Psoas muscle (tissue), 8 donors: ENCODE measurements at regions of chr15 and their contacts with region 1.

Region 1: DNA sequence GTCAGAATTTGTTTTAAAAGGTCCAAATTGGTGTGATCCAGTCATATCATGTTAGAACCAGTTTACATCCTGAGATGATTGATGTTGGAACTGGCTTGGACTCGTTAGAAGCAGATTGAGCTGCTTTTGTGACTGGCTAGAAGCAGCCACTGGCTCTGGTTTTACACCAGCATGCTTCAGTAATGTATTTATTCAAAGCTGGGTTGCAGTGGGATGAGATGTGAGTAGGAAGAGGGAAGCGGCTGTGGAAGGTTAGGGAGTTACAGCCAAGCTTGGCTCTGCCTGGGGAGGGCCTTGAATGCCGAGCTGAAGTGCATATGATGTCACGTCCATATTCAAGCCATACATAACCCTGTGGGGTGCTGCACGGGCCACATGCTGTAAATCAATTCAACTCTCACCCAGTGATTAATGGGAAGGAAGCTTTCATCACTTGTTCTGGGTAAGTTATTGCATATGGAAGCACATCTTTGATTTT is 104.0 kb upstream of the SMAD3 start:
- DNase-seq: no peak
- ATAC-seq: no peak
- H3K4me3 ChIP-seq: no peak overlapping the region
- H3K27ac ChIP-seq: no peak overlapping the region
- H3K4me1 ChIP-seq: no peaks in the 10 kb centered on the region
- H3K27me3 ChIP-seq: no peaks in the 10 kb centered on the region
- CTCF ChIP-seq: no peak

Region 2: DNA sequence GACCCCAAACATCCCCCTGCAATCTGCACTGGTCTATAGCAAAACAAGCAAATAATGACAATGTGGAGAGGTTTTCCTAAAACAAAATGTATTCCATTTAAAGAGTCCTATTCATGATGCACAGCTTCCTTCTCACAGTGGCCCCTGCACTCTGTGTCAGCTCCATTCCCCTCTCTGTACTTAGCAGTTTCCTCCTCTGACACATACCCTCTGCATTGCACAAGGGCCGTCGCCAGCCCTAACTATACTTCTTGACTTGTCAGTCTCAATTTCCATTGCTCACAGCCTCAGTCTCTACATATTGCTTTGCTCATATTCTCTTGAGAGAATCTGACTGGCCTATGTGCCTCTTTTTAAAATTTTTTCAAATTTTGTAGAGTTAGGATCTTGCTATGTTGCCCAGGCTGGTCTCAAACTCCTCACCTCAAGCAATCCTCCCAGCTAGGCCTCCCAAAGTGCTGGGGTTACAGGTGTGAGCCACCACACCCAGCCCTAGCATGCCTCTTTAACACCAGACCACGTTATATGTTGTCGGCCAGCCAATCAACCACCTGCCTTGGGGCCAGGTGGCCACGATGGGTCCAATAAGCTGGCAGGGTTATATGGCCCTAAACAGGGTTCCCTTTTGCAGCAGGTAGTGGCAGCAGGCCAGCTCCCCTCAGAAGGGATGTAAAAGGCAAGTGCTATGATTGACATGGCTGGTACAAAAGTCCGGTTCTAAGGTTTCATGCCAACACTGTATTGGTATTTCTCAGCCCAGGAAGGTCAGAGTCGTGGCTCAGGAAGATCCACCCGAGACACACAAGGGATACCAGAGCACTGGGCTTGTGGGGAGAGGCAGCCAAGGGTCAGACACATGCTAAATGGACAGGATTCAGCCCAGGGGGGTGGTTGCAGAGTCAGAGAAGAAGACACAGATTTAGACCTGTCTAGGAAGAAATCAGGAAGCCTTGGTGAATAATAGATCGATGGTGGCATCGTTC is 44.9 kb after region 1 on chr15:
- intact Hi-C with region 1: loop called in 1 of 2 experiments (anchors 5 kb)
- DNase-seq: no peak
- ATAC-seq: no peak
- H3K4me3 ChIP-seq: no peak overlapping the region
- H3K27ac ChIP-seq: no peak overlapping the region
- H3K4me1 ChIP-seq: peaks cover 13% of the 10 kb centered on the region
- H3K27me3 ChIP-seq: no peaks in the 10 kb centered on the region
- CTCF ChIP-seq: no peak